Activated naive CD4-positive, alpha-beta T cell treated with anti-CD3 and anti-CD28 coated beads for 36 hours (primary cell): ENCODE measurements at regions of chr7 and their contacts with region 1.

Region 1: DNA sequence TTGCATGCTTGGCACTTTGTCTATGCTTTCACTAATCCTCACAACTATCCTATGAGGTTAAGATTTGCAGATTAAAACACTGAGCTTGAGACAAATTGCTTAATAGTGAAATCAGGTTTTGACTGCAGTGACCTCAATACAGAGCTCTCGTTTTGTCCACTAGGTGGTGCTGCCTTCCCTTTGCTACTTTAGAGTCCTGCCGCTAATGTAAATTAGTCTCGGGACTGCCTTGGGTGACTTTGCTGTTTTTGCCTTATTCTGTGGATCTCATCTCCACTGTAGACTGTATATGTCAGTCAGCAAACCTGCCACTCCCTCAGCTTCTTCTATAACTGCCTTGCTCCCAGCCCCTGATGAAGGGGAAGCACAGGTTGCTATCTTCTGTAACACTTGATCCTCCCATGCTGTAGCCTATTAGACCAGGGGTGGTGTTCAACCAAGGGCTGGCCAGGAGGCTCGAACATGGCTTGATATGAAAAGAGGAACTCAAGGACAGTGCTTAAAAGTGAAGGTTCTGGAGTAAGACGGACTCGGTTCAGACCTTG is 26.0 kb downstream of the ASB4 start:
- DNase-seq: peak; percentile 76
- H3K4me3 Mint-ChIP-seq: no peak overlapping the region
- H3K27ac Mint-ChIP-seq: no peak overlapping the region
- H3K4me1 Mint-ChIP-seq: no peaks in the 10 kb centered on the region
- H3K27me3 Mint-ChIP-seq: peaks cover 15% of the 10 kb centered on the region

Region 2: DNA sequence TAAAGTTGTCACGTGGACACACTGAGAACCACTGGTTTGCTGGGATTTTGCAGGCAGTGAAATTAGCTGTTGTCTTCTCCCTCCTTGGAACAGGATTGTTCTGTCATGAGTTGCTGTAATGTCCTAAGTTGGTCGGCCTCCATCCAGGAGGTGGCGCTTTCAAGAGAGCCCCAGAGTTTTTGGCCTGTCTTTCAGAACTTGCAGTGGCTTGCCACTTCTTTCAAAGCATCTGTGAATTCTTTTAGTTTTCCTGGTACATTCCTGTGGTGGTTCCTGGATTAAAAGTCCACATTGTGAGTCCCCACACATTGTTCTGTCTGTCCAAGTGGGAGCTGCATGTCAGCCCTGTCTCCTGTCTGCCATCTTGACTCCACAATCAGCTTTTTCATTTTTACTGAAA is 321.3 kb before region 1 on chr7:
- CTCF ChIA-PET with region 1: no interaction called
- intact Hi-C with region 1: no loop called
- DNase-seq: no peak
- H3K4me3 Mint-ChIP-seq: no peak overlapping the region
- H3K27ac Mint-ChIP-seq: no peak overlapping the region
- H3K4me1 Mint-ChIP-seq: no peaks in the 10 kb centered on the region
- H3K27me3 Mint-ChIP-seq: no peaks in the 10 kb centered on the region

Region 3: GRCh38 chr7:95501261-95501832 is 10.4 kb before region 1 on chr7:
- CTCF ChIA-PET with region 1: interaction called, 10 read pairs
- intact Hi-C with region 1: no loop called
- DNase-seq: peak; percentile 52
- H3K4me3 Mint-ChIP-seq: no peak overlapping the region
- H3K27ac Mint-ChIP-seq: peak overlapping the region; percentile 37
- H3K4me1 Mint-ChIP-seq: peaks cover 24% of the 10 kb centered on the region
- H3K27me3 Mint-ChIP-seq: peaks cover 25% of the 10 kb centered on the region

Region 4: GRCh38 chr7:95690367-95690947 is 178.7 kb after region 1 on chr7:
- CTCF ChIA-PET with region 1: interaction called, 55 read pairs
- intact Hi-C with region 1: loop called (anchors 1 kb)
- DNase-seq: peak; percentile 9
- H3K4me3 Mint-ChIP-seq: no peak overlapping the region
- H3K27ac Mint-ChIP-seq: no peak overlapping the region
- H3K4me1 Mint-ChIP-seq: no peaks in the 10 kb centered on the region
- H3K27me3 Mint-ChIP-seq: peaks cover 2% of the 10 kb centered on the region

Region 5: GRCh38 chr7:95871078-95871782 is 359.4 kb after region 1 on chr7:
- CTCF ChIA-PET with region 1: interaction called, 4 read pairs
- intact Hi-C with region 1: loop called (anchors 1 kb)
- DNase-seq: peak; percentile 23
- H3K4me3 Mint-ChIP-seq: no peak overlapping the region
- H3K27ac Mint-ChIP-seq: no peak overlapping the region
- H3K4me1 Mint-ChIP-seq: no peaks in the 10 kb centered on the region
- H3K27me3 Mint-ChIP-seq: peaks cover 5% of the 10 kb centered on the region